ENCODE measurements at regions of chr20 and their contacts with region 1.

Region 1: GRCh38 chr20:49610701-49611538 is 43.0 kb upstream of the PTGIS start:
- DNase-seq: peak; percentile 79 to 92
- ATAC-seq: peak; percentile 88
- H3K4me3 ChIP-seq: no peak overlapping the region
- H3K27ac ChIP-seq: no peak overlapping the region
- H3K4me1 ChIP-seq: no peaks in the 10 kb centered on the region
- H3K27me3 ChIP-seq: no peaks in the 10 kb centered on the region

Region 2: DNA sequence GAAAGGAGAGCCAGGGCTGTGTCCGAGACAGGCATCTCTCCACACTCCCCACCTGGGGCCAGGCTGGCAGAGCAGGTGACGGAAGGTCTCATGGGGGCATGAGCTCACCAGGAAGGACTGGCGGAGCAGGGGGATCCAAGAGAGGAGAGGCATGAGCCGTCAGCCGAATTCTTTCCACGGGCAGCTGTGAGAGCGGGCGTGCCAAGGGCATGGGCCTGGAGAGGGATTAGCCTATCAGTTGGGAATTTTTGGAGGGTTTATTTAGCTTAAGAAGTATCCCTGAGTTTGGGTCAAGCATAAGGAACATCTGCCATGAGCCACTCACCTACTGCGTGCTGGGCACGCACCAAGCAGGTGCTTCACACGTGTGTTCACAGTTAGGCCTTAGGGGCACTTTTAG is 272.9 kb before region 1 on chr20:
- intact Hi-C with region 1: loop called (anchors 2 to 5 kb)
- DNase-seq: no peak
- ATAC-seq: no peak
- H3K4me3 ChIP-seq: no peak overlapping the region
- H3K27ac ChIP-seq: no peak overlapping the region
- H3K4me1 ChIP-seq: no peaks in the 10 kb centered on the region
- H3K27me3 ChIP-seq: no peaks in the 10 kb centered on the region

Region 3: DNA sequence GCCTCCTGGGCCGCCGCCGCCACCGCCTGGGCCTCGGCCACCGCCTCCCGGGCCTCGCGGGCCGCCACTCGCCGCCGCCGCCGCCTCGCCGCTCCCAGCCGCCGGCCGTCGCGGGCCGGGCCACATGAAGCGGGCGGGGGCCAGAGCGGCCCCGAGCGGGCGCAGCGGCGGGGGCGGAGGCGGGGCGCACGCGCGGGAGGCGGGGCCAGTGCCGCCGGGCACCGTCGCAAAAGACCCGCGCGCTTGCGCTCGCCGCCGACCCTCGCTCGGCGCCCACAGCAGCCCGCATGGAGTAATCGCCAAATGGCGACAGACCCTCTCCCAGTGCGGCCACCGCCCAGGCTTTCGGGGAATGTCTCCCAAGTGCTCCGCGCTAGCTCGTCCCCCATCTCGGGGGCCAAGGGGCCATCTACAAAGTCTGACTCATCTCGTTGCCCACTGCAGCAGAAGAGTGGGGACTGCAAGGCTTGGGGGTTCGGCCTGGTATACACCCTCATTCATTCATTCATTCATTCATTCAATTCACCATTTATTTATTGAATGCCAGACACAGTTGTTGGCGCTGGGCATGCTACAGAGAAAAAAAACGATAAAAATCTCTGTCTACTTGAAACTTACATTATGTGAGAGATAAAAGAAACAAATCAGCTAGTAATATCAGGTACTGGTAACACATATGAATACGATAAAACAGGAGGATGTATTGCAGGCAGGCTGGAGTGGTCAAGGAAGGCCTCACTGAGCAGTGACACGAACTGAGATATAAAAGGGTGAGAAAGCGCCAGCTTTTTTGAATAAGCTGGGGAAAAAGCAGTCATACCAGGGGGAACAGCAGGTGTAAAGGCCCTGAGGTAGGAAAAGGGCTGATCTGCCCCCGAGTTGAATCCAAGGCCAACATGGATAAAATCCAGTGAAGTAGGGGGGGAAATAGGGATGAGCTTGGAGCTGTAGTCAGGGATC is 103.1 kb after region 1 on chr20 and contains the start of gene B4GALT5:
- intact Hi-C with region 1: loop called in 1 of 2 experiments (anchors 5 kb)
- DNase-seq: peak; percentile 82 to 90
- ATAC-seq: peak; percentile 85
- H3K4me3 ChIP-seq: peak within 1 kb of the TSS; percentile 85 to 91
- H3K27ac ChIP-seq: peak within 1 kb of the TSS; percentile 50 to 85
- H3K4me1 ChIP-seq: peaks cover 0 to 13% of the 10 kb centered on the region in 2 donors
- H3K27me3 ChIP-seq: no peaks in the 10 kb centered on the region
- total RNA-seq, gene B4GALT5: 35.9 to 38.3 TPM

Region 4: DNA sequence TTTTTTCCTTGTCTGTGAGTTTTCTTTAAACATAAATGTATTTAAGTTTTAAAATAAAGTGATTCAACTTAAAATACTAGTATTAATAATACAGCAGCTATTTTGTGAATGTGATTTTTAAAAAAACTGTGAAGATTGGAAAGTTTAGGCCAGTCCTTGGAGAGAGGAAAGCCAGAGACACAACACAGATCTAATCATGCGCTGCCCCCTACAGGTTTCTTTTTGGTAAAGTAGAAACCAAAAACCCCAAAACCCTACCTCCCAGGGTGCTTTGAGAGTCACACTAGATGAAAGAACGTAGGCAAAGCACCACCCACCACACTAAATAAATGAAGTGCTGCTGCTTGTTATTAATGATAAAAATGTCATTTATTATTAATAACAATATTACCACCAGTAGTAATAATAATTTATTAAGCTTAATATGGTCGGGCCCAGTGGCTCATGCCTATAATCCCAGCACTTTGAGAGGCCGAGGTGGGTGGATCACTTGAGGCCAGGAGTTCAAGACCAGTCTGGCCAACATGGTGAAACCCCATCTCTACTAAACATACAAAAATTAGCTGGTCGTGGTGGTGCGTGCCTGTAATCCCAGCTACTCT is 235.4 kb after region 1 on chr20:
- intact Hi-C with region 1: loop called (anchors 2 to 5 kb)
- DNase-seq: no peak
- ATAC-seq: peak; percentile 70
- H3K4me3 ChIP-seq: no peak overlapping the region
- H3K27ac ChIP-seq: no peak overlapping the region
- H3K4me1 ChIP-seq: peaks cover 5 to 11% of the 10 kb centered on the region in 2 donors
- H3K27me3 ChIP-seq: no peaks in the 10 kb centered on the region

Region 5: DNA sequence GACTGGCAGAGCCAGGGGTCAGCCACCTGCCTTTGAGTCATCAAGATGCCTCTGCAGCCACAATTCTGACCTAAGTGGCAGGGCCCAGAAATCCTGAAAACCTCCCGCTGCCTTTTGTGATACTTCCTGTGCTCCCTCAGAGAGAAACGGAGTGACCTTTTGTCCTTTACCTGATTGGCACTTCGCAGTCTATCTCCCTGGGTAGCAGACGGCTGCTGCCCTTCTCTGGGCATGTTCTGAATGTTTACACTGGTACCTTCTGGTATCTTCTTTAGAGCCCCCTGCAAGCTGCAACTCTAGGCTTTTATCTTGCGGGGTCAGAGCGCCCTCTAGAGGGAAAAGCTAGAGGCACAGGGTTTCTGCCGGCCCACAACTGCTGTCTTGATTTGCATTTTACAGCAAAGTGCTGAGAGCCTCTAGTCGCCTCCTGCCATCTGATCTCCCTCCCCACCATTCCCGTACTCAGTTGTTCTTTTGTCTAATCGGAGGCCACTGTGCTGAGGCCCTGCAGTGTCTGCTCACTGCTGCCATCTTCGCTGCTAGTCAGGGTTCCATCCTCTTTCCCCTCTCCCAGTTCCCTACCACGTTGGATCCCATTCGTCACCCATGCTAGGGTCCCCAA is 277.5 kb after region 1 on chr20:
- intact Hi-C with region 1: loop called (anchors 1 to 5 kb)
- DNase-seq: no peak
- ATAC-seq: peak; percentile 55
- H3K4me3 ChIP-seq: no peak overlapping the region
- H3K27ac ChIP-seq: peak overlapping the region in 1 of 2 donors; percentile 14
- H3K4me1 ChIP-seq: no peaks in the 10 kb centered on the region
- H3K27me3 ChIP-seq: no peaks in the 10 kb centered on the region

Region 6: DNA sequence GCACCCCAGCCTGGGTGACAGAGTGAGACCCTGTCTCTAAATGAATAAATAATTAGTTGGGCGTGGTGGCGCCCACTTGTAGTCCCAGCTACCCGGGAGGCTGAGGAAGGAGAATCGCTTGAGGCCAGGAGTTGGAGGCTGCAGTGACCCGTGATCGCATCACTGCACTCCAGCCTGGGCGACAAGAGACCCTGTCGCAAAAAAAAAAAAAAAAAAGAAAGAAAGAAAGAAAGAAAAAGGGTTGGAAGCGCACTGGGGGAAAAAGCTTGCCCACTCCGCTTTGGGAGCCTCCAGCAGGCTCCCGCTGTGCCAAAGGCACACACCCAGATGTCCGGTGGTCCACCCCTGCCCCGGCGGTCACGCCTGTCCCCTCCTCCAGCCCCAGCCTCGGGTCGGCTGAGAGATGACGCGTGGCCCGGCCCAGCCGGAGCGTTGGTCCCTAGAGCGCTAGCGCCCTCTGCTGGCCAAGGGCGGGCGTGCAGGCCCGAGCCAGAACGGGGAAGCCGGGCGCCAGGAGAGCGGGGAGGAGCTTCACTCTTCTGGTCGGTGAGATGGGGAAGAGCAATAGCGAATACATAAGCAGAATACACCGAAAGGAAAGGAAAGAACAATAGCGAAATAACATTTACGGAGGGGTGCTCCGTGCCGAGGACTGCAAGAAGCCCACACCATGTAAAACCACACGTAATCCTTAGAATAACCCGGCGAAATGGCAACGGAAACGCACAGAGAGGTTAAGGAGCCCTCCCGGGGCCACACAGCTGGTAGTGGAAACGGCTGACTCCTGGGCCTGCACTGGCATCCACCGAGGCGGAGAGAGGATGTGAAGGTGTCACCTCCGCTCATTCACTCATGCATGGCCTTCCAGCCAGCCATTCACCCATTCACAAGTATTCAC is 460.3 kb after region 1 on chr20:
- intact Hi-C with region 1: no loop called
- DNase-seq: peak; percentile 93 to 98
- ATAC-seq: peak; percentile 96
- H3K4me3 ChIP-seq: no peak overlapping the region
- H3K27ac ChIP-seq: no peak overlapping the region
- H3K4me1 ChIP-seq: no peaks in the 10 kb centered on the region
- H3K27me3 ChIP-seq: no peaks in the 10 kb centered on the region

Measured in aorta (tissue), 5 donors.